Activated CD4-positive, alpha-beta memory T cell treated with anti-CD3 and anti-CD28 coated beads for 36 hours (primary cell): ENCODE measurements at regions of chr5 and their contacts with region 1.

Region 1: DNA sequence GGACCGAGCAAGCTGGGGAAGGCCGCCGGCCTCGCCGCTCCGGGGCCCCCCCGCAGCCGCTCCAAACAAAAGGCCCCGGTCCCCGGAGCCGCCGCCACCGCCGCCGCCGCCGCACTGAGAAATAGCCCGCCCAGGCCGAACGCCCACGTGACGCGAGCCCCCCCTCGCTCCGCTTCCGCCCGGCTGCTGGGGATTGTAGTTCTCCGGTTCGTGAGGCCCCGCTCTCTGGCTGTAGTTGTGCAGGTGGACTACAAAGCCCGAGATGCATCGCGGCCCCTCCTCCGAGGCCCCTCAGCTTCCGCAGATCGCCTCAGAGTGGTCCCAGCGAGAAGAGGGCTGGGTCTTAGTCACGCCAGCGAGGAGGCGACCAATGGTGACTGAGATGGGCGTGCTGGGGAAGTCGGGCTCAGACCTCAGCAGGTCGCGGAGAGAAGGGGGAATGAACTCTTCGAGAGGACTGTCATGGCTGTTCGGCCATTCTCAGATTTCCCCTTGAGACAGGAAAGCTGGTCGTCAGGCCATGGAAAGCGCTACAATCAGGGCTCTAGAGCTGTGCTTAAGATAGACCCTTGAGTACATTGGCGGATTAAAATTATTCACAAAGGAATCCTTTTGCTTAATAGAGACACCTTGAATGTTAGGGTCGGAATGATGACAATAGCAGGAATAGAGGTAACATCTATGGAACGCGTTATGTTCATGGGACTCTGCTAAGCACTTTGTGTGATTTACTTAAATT is 489 bp upstream of the PANK3 start:
- DNase-seq: peak; percentile 99
- H3K4me3 Mint-ChIP-seq: peak overlapping the region; percentile 81
- H3K27ac Mint-ChIP-seq: peak overlapping the region; percentile 96
- H3K4me1 Mint-ChIP-seq: peaks cover 34% of the 10 kb centered on the region
- H3K27me3 Mint-ChIP-seq: no peaks in the 10 kb centered on the region

Region 2: DNA sequence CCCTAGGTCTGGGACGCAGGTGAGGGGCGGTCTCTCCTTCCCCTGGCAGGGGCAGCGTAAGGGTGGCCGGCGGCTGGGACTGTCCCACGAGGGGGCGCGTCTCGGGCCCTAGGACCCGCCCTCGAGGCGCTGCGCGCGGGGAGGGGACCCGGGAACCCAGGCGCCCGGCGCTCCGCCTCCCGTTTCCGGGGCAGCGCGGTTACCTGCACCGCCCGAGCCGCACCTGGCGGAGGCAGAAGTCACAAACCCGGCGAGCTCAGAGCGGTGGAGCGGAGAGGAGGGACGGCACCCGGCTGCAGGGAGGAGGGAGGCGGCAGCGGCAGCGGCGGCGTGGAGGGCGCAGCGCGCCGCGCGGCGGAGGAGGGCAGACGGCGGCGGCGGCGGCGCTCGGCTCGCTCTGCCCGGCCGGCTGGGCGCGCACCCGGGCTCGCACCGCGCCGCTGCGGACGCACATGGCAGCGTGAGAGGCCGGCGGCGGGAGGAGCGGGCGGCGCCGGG is 288.1 kb before region 1 on chr5 and contains the start of gene WWC1:
- CTCF ChIA-PET with region 1: no interaction called
- POLR2A ChIA-PET with region 1: no interaction called
- intact Hi-C with region 1: loop called (anchors 5 kb)
- DNase-seq: peak; percentile 72
- H3K4me3 Mint-ChIP-seq: peak within 1 kb of the TSS; percentile 64
- H3K27ac Mint-ChIP-seq: no peak within 1 kb of the TSS
- H3K4me1 Mint-ChIP-seq: peaks cover 29% of the 10 kb centered on the region
- H3K27me3 Mint-ChIP-seq: peaks cover 11% of the 10 kb centered on the region
- total RNA-seq, gene WWC1: 0.82 to 1.3 TPM

Region 3: DNA sequence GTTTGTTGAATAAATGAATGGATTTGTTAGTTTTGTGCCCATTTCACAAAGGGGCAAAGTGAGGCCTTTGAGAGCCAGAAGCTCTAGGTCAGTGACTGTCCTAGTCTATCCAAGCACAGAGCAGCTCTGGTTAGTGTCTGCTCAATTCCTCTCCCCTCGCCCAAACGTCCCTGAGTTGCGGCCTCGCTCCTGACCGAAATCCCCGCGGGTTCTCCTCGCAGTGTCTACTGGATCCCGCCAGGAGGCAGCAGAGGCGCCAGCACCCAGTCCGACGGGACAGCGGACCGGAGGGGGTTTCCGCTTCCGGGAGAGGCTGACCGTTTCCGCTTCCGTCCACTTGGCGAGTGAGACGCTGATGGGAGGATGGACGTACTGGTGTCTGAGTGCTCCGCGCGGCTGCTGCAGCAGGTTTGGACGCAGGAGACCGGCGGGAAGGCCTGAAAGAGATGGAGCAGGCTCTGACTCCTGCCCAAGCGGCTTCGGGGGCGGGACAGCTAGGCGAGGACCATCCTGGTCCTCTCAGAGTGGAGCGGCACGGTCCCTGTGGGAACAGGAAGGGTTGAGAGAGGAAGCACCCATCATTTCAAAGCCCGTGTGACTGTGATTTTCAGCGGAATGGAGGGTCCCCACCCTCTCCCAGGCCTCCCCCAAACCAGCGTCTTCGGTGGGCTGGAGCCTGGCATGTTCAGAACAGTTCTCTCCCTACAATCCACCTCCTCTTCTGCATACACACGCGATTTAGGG is 93.3 kb before region 1 on chr5 and contains the start of gene RARS1:
- CTCF ChIA-PET with region 1: no interaction called
- POLR2A ChIA-PET with region 1: interaction called, 6 read pairs
- intact Hi-C with region 1: loop called (anchors 1 kb)
- DNase-seq: peak; percentile 96
- H3K4me3 Mint-ChIP-seq: peak within 1 kb of the TSS; percentile 99
- H3K27ac Mint-ChIP-seq: peak within 1 kb of the TSS; percentile 89
- H3K4me1 Mint-ChIP-seq: peaks cover 37% of the 10 kb centered on the region
- H3K27me3 Mint-ChIP-seq: no peaks in the 10 kb centered on the region
- total RNA-seq, gene RARS1: 98.6 to 101 TPM

Region 4: DNA sequence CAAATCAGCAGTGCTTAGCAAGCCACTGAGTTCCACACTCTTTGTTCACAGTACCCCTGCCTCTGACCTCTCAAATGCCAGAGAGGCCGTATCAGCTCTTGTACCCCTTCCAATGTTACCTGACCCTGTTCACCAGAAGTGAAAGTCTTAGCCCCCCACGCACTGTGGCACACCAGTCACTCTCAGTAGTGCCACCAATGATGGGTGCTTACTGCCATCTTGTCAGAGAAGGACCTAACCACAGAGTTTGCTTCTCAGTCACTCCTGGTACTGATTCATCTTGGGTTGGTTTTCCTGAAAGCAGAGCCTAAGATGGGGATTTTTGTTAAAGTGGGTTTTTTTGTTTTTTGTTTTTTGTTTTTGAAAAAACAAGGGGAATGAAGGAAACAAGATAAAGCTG is 28.3 kb after region 1 on chr5:
- CTCF ChIA-PET with region 1: no interaction called
- POLR2A ChIA-PET with region 1: no interaction called
- intact Hi-C with region 1: loop called (anchors 1 kb)
- DNase-seq: peak; percentile 76
- H3K4me3 Mint-ChIP-seq: no peak overlapping the region
- H3K27ac Mint-ChIP-seq: peak overlapping the region; percentile 24
- H3K4me1 Mint-ChIP-seq: peaks cover 20% of the 10 kb centered on the region
- H3K27me3 Mint-ChIP-seq: peaks cover 3% of the 10 kb centered on the region

Region 5: DNA sequence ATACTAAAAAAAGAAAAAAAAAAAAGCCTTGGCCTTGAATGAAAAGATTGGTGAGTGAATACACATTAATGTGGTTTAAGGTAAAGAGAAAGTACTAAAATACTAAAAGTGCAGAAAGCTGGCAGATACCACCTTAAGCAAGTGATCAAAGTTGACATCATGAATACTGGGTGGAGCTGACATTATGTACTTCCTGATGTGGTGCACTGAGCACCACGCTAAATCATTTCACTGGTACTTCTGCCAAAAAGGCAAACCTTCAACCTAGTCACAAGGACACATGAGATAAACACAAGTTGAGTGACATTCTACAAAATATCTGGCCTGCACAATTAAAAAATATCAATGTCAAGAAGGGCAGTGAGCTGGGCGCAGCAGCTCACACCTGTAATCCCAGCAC is 33.3 kb after region 1 on chr5:
- CTCF ChIA-PET with region 1: no interaction called
- POLR2A ChIA-PET with region 1: no interaction called
- intact Hi-C with region 1: loop called (anchors 1 kb)
- DNase-seq: no peak
- H3K4me3 Mint-ChIP-seq: peak overlapping the region; percentile 35
- H3K27ac Mint-ChIP-seq: peak overlapping the region; percentile 4
- H3K4me1 Mint-ChIP-seq: peaks cover 19% of the 10 kb centered on the region
- H3K27me3 Mint-ChIP-seq: no peaks in the 10 kb centered on the region

Region 6: DNA sequence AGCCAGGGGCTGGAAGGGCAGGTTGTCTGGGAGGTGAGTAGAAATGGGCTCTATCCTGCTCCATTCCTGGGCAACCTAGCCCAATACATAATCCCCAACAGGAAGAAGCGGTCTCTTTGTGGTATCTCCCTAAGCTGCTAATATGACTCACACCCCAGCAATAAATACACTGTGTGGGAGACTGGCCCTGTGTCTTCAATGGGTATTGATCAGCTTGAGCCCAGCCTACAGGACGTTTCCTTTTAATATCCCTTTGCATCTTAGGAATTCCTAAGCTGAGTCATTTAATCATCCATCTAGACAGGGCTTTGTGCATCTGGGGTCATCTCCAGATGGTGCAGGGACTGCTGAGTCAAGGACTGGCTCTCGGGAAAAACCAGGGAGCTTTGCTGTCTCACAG is 206.5 kb after region 1 on chr5:
- CTCF ChIA-PET with region 1: no interaction called
- POLR2A ChIA-PET with region 1: no interaction called
- intact Hi-C with region 1: no loop called
- DNase-seq: no peak
- H3K4me3 Mint-ChIP-seq: no peak overlapping the region
- H3K27ac Mint-ChIP-seq: no peak overlapping the region
- H3K4me1 Mint-ChIP-seq: no peaks in the 10 kb centered on the region
- H3K27me3 Mint-ChIP-seq: peaks cover 5% of the 10 kb centered on the region

Region 7: DNA sequence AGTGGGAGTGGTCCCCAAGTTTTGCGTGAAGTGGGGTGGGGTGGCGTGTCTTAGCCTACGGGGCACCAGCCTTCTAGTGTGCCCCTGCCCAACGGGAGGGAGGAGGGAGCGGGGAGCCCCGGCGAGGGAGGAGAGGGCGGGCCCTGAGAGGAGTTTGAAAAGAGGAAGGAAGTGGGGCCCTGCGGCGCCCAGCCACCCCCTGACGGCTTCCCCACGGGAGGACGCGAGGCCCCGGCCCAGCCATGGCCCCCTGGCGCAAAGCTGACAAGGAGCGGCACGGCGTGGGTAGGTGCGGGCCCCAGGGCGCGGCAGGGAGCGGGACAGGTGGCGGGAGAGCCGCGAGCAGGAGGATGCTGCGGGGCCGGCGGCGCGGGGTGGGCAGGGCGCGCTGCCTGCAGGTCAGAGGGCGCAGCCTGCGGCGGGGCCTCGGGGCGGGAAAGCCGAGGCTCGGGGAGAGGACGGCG is 1057.5 kb after region 1 on chr5 and contains the start of gene DOCK2:
- CTCF ChIA-PET with region 1: no interaction called
- POLR2A ChIA-PET with region 1: no interaction called
- intact Hi-C with region 1: loop called (anchors 5 kb)
- DNase-seq: peak; percentile 81
- H3K4me3 Mint-ChIP-seq: peak within 1 kb of the TSS; percentile 85
- H3K27ac Mint-ChIP-seq: peak within 1 kb of the TSS; percentile 90
- H3K4me1 Mint-ChIP-seq: peaks cover 48% of the 10 kb centered on the region
- H3K27me3 Mint-ChIP-seq: peaks cover 1% of the 10 kb centered on the region
- total RNA-seq, gene DOCK2: 191 to 205 TPM

Region 8: DNA sequence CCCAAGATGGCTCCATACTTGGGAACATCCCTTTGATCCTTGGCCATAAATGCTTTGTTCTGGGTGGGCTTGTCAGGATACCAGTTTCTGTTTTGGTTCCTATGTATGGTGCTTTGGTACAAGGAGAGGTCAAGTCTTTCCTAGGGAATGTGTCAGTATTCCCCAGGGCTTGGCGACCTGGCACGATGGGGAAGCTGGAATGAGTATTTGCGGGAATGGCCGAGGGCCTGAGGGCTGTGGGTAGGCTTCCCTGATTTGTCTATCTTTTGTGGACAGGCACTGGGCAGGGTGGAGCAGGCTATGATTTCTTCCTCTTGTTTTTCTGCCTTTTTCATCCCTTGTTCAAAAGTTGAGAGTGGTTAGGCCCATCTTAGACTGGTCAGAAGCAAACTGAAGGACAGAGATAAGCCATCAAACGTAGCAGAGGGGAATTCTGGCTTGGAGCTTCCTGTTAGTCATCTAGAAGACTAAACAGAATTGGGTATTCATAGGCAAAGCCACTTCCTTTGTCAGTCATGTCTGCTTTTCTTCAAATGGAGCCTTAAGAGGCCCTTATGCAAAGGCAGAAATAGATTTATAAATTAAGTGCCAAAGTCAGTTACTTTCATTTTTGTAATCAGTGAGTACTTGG is 1071.2 kb after region 1 on chr5:
- CTCF ChIA-PET with region 1: no interaction called
- POLR2A ChIA-PET with region 1: no interaction called
- intact Hi-C with region 1: no loop called
- DNase-seq: no peak
- H3K4me3 Mint-ChIP-seq: peak overlapping the region; percentile 55
- H3K27ac Mint-ChIP-seq: peak overlapping the region; percentile 95
- H3K4me1 Mint-ChIP-seq: peaks cover 98% of the 10 kb centered on the region
- H3K27me3 Mint-ChIP-seq: no peaks in the 10 kb centered on the region